ENCODE measurements at regions of chr6 and their contacts with region 1.

Region 1: DNA sequence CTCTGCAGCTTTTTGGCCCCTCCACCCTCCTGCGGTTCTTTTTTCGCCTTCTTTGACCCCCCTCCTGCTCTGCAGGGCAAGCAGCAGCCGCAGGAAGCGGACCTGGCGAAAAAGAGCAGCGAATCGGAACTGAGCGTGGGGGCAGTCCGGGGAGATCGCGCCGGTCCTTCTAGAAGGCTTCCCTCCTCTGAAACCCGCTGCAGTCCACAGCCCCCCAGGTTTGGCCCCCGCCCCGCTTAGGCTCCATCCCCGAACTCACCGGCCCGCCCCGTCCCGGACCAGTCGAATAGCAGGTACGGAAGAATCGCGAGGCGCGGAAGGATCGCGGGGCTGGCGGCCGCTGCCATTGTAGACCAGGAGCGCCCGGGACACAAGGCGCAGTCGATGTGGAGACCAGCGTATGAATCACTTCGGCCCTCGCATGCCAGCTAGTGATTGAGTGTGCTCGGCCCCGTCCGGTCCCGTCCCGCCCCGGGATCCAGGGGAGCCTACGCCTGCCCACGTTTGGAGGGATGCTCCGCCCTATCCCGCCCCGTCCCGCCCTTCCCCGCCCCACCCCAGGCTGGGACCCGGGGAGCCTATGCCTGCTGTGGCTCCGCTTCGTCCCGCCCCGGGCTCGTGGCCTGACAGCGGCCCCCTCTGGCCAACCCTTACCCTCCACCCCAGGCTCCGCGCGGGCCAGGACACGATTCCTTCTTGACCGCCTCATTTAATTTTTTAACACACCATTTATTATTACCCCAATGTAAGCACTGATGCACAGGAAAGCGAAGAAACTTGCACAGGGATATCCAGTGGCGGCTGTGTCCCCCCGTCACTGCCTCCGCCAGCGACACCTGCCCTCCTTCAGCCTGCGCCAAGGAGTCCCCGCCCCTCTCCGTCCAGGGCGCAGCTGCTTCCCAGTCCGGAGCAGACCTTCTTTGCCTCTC is at the start of gene ULBP3:
- DNase-seq: peak; percentile 93
- H3K4me3 ChIP-seq: peak within 1 kb of the TSS; percentile 65 to 73
- H3K27ac ChIP-seq: no peak within 1 kb of the TSS
- H3K4me1 ChIP-seq: no peaks in the 10 kb centered on the region; a peak in 1 of 4 replicates
- H3K27me3 ChIP-seq: peaks cover 12% of the 10 kb centered on the region; the same call in 1 of the 2 replicates
- CTCF ChIP-seq: peak; percentile 61
- EP300 ChIP-seq: no peak
- RAD21 ChIP-seq: peak; percentile 4; the same call in 1 of the 2 replicates
- polyA plus RNA-seq, gene ULBP3: 4.6 and 4.9 TPM in 2 replicates

Region 2: GRCh38 chr6:150046943-150047342 is 22.0 kb before region 1 on chr6:
- CTCF ChIA-PET with region 1: interaction called, 12 read pairs
- POLR2A ChIA-PET with region 1: no interaction called
- DNase-seq: no peak
- H3K4me3 ChIP-seq: no peak overlapping the region
- H3K27ac ChIP-seq: no peak overlapping the region
- H3K4me1 ChIP-seq: no peaks in the 10 kb centered on the region
- H3K27me3 ChIP-seq: peaks cover 21% of the 10 kb centered on the region
- CTCF ChIP-seq: no peak
- EP300 ChIP-seq: no peak
- RAD21 ChIP-seq: no peak

Region 3: DNA sequence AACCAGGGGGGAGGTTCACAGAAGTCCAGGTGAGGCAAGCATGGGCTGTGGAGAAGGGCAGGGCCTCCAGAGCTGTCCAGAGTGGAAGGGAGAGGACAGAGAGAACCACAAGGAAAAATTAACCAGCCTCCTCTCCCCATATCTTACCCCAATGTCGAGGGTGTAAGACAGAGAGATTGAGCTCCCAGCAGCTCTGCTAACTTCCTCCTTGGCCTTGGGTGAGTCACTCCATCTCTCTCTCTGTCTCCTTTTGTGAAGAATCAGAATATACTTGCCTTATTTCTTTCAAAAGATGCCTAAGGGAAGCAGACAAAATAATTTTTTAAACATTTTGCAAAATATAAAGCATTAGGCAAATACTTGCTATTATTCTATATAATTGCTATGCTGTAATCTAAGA is 241.6 kb after region 1 on chr6:
- CTCF ChIA-PET with region 1: no interaction called
- POLR2A ChIA-PET with region 1: no interaction called
- DNase-seq: no peak
- H3K4me3 ChIP-seq: no peak overlapping the region
- H3K27ac ChIP-seq: no peak overlapping the region
- H3K4me1 ChIP-seq: no peaks in the 10 kb centered on the region
- H3K27me3 ChIP-seq: no peaks in the 10 kb centered on the region; the same call in 1 of the 2 replicates
- CTCF ChIP-seq: no peak
- EP300 ChIP-seq: no peak
- RAD21 ChIP-seq: no peak